HEK293 (cell line): ENCODE measurements at regions of chr22 and their contacts with region 1.

Region 1: DNA sequence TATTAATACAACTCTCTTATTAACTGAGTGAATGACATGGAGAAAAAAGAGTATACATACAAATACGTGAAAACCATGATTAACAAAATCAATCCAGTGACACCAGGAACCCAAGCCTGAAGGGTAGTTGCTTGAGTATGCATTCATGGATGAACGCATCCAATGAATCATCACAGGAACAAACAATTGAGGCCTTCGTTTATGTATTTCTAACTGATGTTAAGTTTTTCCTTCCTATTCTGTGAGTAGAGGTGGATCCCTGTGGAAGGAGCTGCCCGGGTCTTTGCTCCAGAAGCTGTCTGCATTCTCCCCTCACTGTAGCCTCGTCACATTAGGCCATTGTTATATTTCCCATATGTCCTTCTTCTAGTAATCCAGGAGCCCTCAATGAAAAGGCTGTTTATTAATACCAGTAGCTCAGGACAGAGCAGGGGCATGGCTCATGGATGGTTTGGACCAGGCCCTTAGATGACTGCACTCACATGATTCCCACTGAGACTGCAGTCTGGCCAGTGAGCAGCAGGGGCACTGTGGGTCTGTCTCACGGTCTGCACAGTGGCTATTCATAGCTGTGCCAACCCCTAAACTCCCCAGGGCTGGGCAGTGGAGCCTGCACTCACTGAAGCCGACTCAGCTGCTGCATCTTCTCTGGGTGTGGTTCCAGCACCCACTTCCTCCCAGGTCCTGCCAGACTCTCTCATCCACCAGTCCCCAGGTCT is 128.1 kb upstream of the TOP3B start:
- H3K4me3 ChIP-seq: no peak overlapping the region
- H3K27ac ChIP-seq: no peak overlapping the region
- H3K4me1 ChIP-seq: no peaks in the 10 kb centered on the region
- CTCF ChIP-seq: peak; percentile 40; the same call in 1 of the 2 replicates

Region 2: GRCh38 chr22:22092101-22092500 is 18.6 kb before region 1 on chr22:
- CTCF ChIA-PET with region 1: no interaction called
- POLR2A ChIA-PET with region 1: no interaction called
- H3K4me3 ChIP-seq: no peak overlapping the region
- H3K27ac ChIP-seq: no peak overlapping the region
- H3K4me1 ChIP-seq: no peaks in the 10 kb centered on the region
- CTCF ChIP-seq: no peak

Region 3: DNA sequence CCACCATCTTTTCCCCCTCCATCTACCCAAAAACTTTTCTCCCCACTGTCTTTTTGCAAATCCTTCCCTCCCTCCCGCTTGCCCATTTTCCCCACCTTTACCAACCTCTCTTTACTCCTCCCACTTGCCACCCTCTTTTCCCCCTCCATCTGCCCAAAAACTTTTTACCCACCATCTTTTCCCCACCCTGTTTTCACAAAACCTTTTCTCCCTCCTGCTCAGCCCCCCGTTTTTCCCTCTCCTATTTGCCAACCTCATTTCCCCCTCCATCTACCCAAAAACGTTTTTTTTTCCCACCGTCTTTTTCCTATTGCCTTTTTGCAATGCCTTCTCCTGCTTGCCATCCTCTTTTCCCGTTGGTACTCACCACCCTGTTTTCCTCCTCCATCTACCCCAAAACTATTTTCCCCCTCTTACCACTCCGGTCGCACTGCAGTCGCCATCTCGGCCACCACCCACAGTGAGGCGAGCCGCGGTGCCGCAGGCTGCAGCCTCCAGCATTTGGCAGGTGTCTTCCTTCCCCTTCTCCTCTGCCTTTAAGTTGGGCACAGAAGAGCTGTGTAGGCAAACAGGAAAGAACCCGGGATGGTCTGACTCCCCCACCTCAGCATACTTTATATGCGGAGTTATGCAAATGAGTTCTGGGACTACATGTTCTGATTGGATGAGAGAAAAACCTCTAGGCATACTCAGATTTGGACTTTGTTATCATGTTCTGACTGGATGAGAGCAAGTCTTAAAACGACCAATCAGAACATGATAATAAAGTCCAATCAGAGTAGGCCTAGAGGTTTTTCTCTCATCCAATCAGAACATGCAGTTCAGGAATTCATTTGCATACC is 12.6 kb after region 1 on chr22:
- CTCF ChIA-PET with region 1: interaction called, 17 read pairs
- POLR2A ChIA-PET with region 1: interaction called, 3 read pairs
- H3K4me3 ChIP-seq: no peak overlapping the region
- H3K27ac ChIP-seq: no peak overlapping the region
- H3K4me1 ChIP-seq: no peaks in the 10 kb centered on the region
- CTCF ChIP-seq: no peak

Region 4: GRCh38 chr22:22137891-22138290 is 27.2 kb after region 1 on chr22:
- CTCF ChIA-PET with region 1: interaction called, 24 read pairs
- POLR2A ChIA-PET with region 1: no interaction called
- H3K4me3 ChIP-seq: no peak overlapping the region
- H3K27ac ChIP-seq: no peak overlapping the region
- H3K4me1 ChIP-seq: no peaks in the 10 kb centered on the region
- CTCF ChIP-seq: no peak